ENCODE measurements at regions of chr12 and their contacts with region 1.

Region 1: GRCh38 chr12:52522346-52523011 is 2.3 kb upstream of the KRT5 start:
- H3K4me3 ChIP-seq: no peak overlapping the region
- H3K27ac ChIP-seq: no peak overlapping the region
- H3K4me1 ChIP-seq: no peaks in the 10 kb centered on the region
- CTCF ChIP-seq: no peak

Region 2: DNA sequence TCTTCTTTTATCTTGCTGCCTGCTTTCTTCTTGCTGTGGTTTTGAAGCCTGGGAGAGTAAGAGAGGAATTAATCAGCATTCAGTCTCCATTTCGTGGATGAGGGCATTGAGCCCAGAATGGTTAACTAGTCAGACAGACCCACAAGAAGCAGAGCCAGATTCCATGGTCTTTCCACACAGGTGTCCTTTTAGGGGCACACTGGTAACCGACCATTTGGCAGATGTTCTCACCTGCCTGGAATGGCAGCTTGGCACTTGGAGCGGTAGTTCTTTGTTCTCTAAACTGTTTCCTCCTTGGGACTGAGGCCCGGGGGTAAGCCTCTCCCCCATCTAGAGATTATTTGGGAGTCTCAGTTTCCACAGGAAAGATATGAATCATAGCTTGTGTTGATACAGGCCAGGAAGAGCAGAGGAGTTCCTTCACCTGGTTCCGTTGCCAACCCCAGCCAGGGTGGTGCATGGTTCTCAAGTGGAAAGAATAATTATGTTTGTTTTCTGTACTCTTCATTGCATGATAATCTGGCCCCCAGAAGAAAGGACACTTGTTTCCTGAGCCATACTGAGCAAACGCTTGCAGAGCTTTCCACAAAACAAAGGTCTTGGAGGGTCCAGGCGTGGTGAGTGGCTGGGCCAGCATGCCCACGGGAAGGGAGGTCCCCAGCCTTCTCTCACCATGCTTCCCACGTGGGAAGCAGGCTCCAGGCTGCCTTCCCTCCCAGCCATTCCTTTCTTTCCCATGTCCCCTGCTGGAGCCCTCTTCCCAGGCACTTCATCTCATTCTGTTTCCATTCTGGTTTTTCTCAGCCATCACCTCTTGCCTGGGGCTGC is 86.3 kb before region 1 on chr12:
- CTCF ChIA-PET with region 1: no interaction called
- POLR2A ChIA-PET with region 1: no interaction called
- H3K4me3 ChIP-seq: no peak overlapping the region
- H3K27ac ChIP-seq: no peak overlapping the region
- H3K4me1 ChIP-seq: no peaks in the 10 kb centered on the region
- CTCF ChIP-seq: no peak

Region 3: GRCh38 chr12:52506858-52507715 is 15.4 kb before region 1 on chr12:
- CTCF ChIA-PET with region 1: interaction called, 14 read pairs
- POLR2A ChIA-PET with region 1: no interaction called
- H3K4me3 ChIP-seq: no peak overlapping the region
- H3K27ac ChIP-seq: no peak overlapping the region
- H3K4me1 ChIP-seq: no peaks in the 10 kb centered on the region
- CTCF ChIP-seq: no peak